H1 (cell line): ENCODE measurements at regions of chr16 and their contacts with region 1.

Region 1: DNA sequence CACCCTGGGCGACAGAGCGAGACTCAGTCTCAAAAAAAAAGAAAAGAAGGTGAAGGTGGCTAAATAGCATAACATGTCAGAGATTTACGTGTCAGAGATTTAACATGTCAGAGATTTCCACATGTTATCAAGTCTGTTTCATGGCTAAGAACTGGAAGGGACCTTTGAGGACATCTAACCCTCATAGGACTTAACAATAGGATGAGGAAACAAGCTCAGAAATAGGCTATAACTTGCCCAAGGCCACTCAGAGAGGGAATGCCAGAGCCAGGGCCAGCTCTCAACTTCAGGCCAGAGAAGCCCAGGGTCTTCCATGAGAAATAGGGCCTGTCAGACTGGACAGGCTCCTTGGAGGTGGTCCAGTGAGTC is 26.8 kb upstream of the ZNF629 start:
- DNase-seq: no peak
- H3K4me3 ChIP-seq: peak overlapping the region; percentile 21 to 55 (median 29); a peak in 5 of 8 replicates
- H3K27ac ChIP-seq: no peak overlapping the region
- H3K4me1 ChIP-seq: no peaks in the 10 kb centered on the region; a peak in 4 of 7 replicates
- H3K27me3 ChIP-seq: peaks cover 0 to 5% (median 2%) of the 10 kb centered on the region in 4 experiments; a peak in 1 of 7 replicates
- CTCF ChIP-seq: no peak
- EP300 ChIP-seq: no peak
- POLR2A ChIP-seq: no peak
- RAD21 ChIP-seq: no peak

Region 2: GRCh38 chr16:30677931-30678585 is 135.7 kb before region 1 on chr16:
- CTCF ChIA-PET with region 1: no interaction called
- POLR2A ChIA-PET with region 1: no interaction called
- DNase-seq: peak; percentile 71 to 87
- H3K4me3 ChIP-seq: no peak overlapping the region
- H3K27ac ChIP-seq: no peak overlapping the region
- H3K4me1 ChIP-seq: peaks cover 0 to 3% (median 3%) of the 10 kb centered on the region in 4 experiments; a peak in 4 of 7 replicates
- H3K27me3 ChIP-seq: peaks cover 76 to 95% (median 94%) of the 10 kb centered on the region in 4 experiments
- CTCF ChIP-seq: no peak
- EP300 ChIP-seq: peak in 1 of 2 experiments; percentile 62; a peak in 1 of 3 replicates
- POLR2A ChIP-seq: no peak
- RAD21 ChIP-seq: no peak

Region 3: DNA sequence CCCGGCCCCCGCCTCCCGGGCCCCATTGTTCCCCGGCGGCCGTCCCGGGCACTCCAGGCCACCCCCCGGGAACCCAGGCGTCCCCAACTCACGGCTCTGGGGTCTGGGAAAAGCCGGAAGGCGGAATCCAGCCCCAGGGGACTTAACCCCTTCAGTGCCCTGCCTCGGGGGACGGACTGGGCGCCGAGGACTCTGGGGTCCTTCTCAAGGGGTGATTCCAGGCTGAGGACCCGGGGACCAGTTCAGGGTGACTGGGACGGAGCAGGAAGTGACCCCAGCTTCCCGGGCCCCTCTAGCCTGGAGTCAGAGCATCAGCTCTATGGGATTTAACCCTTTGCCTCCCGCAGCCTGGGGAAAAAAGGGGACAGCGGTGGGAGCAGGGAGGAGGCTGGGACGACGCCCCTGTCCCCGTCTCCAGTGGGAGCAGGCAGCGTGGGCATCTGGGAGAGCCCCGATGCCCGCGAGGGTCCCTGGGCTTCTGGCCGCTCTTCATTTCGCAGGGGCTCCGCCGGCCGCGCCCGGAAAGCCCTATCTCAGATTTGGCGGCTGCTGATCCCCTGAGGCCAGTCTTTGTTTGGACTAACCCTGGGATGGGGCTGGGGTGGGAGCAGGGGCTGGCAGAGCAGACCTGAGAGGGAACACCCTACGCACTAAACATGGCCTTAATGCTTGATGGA is 26.7 kb before region 1 on chr16 and contains the start of gene ZNF629:
- CTCF ChIA-PET with region 1: interaction called, 17 read pairs
- POLR2A ChIA-PET with region 1: interaction called, 4 read pairs
- DNase-seq: peak in 1 of 2 experiments; percentile 87
- H3K4me3 ChIP-seq: peak within 1 kb of the TSS; percentile 70 to 99 (median 93)
- H3K27ac ChIP-seq: peak within 1 kb of the TSS; percentile 79
- H3K4me1 ChIP-seq: peaks cover 0 to 8% (median 0%) of the 10 kb centered on the region in 4 experiments; a peak in 2 of 7 replicates
- H3K27me3 ChIP-seq: no peaks in the 10 kb centered on the region; a peak in 1 of 7 replicates
- CTCF ChIP-seq: peak in 1 of 3 experiments; percentile 17; a peak in 1 of 4 replicates
- EP300 ChIP-seq: 0 out of 3 replicates have a peak, but pooled peaks of 1 of the 2 experiments have one; percentile 11
- POLR2A ChIP-seq: peak in 1 of 2 experiments; percentile 59; a peak in 2 of 3 replicates
- RAD21 ChIP-seq: peak in 1 of 2 experiments; percentile 17; a peak in 1 of 4 replicates
- total RNA-seq, gene ZNF629: 19.3 and 19.5 TPM in 2 replicates

Region 4: DNA sequence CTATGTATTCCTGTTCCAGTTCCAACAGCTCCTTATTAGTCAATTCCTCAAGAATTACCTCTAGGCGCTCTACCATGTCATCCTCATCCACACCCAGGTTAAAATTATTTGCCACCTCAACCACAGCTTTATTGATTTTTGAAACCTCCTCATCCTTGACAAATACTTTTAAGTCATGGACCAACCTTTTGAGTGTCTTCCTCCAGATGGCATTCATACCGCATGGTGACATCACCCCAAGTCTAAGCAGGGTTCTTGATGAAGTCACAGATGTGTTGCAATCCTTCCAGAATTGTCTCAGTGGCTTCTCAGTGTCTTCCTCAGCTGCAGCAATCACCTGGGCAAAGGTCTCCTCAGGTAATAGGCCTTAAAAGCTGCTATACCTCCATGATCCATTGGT is 40.0 kb after region 1 on chr16:
- CTCF ChIA-PET with region 1: no interaction called
- POLR2A ChIA-PET with region 1: no interaction called
- DNase-seq: no peak
- H3K4me3 ChIP-seq: no peak overlapping the region
- H3K27ac ChIP-seq: no peak overlapping the region
- H3K4me1 ChIP-seq: no peaks in the 10 kb centered on the region
- H3K27me3 ChIP-seq: peaks cover 0 to 8% (median 5%) of the 10 kb centered on the region in 4 experiments; a peak in 3 of 7 replicates
- CTCF ChIP-seq: no peak
- EP300 ChIP-seq: no peak
- POLR2A ChIP-seq: no peak
- RAD21 ChIP-seq: no peak